Prostate gland (tissue), 2 donors: ENCODE measurements at regions of chr2 and their contacts with region 1.

Region 1: DNA sequence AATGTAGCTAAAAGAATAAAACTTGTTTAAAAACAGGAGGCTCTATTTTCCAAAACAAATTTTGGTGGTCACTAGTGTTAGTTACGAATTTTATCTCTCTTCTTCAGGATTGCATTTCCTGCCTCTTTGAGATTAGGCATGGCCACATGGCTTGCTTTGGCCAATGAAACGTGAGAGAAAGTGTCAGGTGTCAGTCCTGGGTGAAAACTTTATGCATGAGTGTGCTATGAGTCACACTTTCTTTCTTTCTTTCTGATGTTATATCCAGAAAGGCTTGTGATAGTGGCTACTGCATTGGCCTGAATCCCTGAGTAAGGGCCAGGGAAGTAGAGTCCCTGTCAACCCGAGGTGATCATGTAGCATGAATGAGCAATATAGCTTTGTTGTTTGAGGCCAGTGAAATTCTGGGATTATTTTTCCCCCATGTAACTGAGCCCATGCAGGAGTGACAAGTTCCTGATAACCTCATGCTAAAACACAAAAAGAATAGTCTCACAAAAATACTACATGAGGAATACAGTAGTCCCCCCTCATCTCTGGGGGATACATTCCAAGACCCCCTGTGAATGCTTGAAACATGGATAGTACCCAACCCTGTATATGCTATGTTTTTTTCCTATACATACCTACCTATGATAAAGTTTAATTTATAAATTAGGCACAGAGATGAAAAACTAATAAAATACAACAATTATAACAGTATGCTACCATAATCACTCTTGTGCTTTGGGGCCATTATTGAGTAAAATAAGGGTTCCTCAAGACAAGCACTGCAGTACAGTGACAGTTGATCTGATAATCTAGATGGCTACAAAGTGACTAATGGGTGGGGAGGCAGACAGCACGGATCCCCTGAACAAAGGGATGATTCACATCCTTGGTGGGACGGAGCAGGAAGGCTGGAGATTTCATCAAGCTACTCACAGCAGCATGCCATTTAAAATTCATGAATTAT is 109.5 kb downstream of the CDC42EP3 start:
- DNase-seq: no peak
- H3K4me3 ChIP-seq: no peak overlapping the region
- H3K27ac ChIP-seq: no peak overlapping the region
- H3K4me1 ChIP-seq: peaks cover 5% of the 10 kb centered on the region
- H3K27me3 ChIP-seq: no peaks in the 10 kb centered on the region
- CTCF ChIP-seq: no peak
- POLR2A ChIP-seq: no peak

Region 2: GRCh38 chr2:37263839-37264238 is 298.1 kb before region 1 on chr2:
- intact Hi-C with region 1: no loop called
- DNase-seq: no peak
- H3K4me3 ChIP-seq: no peak overlapping the region
- H3K27ac ChIP-seq: no peak overlapping the region
- H3K4me1 ChIP-seq: no peaks in the 10 kb centered on the region
- H3K27me3 ChIP-seq: no peaks in the 10 kb centered on the region
- CTCF ChIP-seq: no peak
- POLR2A ChIP-seq: no peak

Region 3: GRCh38 chr2:37614061-37614738 is 52.3 kb after region 1 on chr2:
- intact Hi-C with region 1: loop called (anchors 5 kb)
- DNase-seq: no peak
- H3K4me3 ChIP-seq: no peak overlapping the region
- H3K27ac ChIP-seq: no peak overlapping the region
- H3K4me1 ChIP-seq: no peaks in the 10 kb centered on the region
- H3K27me3 ChIP-seq: no peaks in the 10 kb centered on the region
- CTCF ChIP-seq: no peak
- POLR2A ChIP-seq: no peak

Region 4: GRCh38 chr2:37665604-37666362 is 103.9 kb after region 1 on chr2:
- intact Hi-C with region 1: loop called (anchors 5 kb)
- DNase-seq: no peak
- H3K4me3 ChIP-seq: no peak overlapping the region
- H3K27ac ChIP-seq: peak overlapping the region; percentile 45 to 93
- H3K4me1 ChIP-seq: peaks cover 3% of the 10 kb centered on the region
- H3K27me3 ChIP-seq: no peaks in the 10 kb centered on the region
- CTCF ChIP-seq: no peak
- POLR2A ChIP-seq: no peak

Region 5: DNA sequence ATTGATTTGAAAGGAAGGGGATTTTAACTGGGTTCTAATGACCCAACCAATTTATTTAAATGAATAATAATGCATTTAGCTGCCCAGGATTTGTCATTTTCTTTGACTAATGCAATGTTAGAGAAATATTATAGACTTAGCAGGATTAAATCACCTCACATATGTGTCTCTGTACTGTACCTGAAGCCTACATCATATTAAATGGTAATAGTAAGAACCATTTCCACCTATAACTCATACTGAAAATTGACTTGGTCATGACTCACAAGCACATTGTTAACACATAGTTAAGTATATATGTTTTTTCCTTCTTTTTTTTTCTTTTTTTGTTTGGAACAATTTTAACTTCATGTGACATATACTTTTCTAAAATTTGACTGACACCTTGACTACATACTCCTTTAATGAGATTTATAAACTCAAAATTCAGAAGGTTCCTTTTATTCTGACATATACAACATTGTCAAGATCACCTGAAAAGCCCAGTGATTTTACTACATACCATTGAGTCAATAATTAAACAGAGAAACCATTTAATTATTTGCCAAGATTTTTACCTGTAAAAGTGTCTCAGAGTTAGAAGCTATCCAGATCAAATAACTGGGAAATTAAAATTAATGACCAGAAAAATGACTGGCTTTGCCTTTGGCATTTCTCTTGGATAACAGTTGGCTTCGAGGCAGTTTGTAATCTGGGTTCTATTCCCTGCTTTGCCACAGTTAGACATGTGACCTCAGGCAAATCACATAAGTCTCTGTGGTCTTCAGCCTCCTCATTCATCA is 168.3 kb after region 1 on chr2:
- intact Hi-C with region 1: no loop called
- DNase-seq: no peak
- H3K4me3 ChIP-seq: no peak overlapping the region
- H3K27ac ChIP-seq: no peak overlapping the region
- H3K4me1 ChIP-seq: no peaks in the 10 kb centered on the region
- H3K27me3 ChIP-seq: no peaks in the 10 kb centered on the region
- CTCF ChIP-seq: no peak
- POLR2A ChIP-seq: no peak

Region 6: DNA sequence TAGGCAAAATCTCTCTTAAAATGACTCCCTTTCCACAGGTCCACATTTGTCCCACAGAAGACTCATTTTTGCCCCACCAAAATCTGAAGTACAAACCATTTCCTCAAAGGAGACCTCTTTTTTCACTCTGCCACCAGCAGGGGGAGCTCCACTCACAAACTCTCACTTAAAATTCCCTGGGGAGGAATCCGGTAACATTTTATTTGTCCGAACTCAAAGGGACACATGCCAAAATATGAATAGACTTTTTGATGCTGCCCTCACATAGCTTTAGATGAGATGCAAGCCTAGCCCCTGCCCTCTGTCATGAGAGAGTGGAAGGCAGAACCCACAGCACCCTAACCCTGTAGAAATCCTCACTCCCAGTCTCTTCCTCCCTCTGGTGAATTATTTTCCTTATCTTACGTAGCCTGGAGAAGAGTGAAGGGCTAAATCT is 420.3 kb after region 1 on chr2:
- intact Hi-C with region 1: no loop called
- DNase-seq: peak; percentile 60
- H3K4me3 ChIP-seq: no peak overlapping the region
- H3K27ac ChIP-seq: no peak overlapping the region
- H3K4me1 ChIP-seq: no peaks in the 10 kb centered on the region
- H3K27me3 ChIP-seq: no peaks in the 10 kb centered on the region
- CTCF ChIP-seq: peak; percentile 78 to 90 (median 82)
- POLR2A ChIP-seq: no peak